ENCODE measurements at regions of chr10 and their contacts with region 1.

Region 1: GRCh38 chr10:125982260-125982948 is 86.0 kb downstream of the FANK1 start:
- DNase-seq: peak; percentile 85
- ATAC-seq: peak; percentile 76
- H3K4me3 ChIP-seq: no peak overlapping the region
- H3K4me3 Mint-ChIP-seq: no peak overlapping the region
- H3K27ac ChIP-seq: no peak overlapping the region
- H3K27ac Mint-ChIP-seq: peak overlapping the region; percentile 35
- H3K4me1 ChIP-seq: no peaks in the 10 kb centered on the region
- H3K4me1 Mint-ChIP-seq: peaks cover 13% of the 10 kb centered on the region
- H3K27me3 ChIP-seq: no peaks in the 10 kb centered on the region
- H3K27me3 Mint-ChIP-seq: peaks cover 15% of the 10 kb centered on the region
- CTCF ChIP-seq: peak; percentile 85

Region 2: DNA sequence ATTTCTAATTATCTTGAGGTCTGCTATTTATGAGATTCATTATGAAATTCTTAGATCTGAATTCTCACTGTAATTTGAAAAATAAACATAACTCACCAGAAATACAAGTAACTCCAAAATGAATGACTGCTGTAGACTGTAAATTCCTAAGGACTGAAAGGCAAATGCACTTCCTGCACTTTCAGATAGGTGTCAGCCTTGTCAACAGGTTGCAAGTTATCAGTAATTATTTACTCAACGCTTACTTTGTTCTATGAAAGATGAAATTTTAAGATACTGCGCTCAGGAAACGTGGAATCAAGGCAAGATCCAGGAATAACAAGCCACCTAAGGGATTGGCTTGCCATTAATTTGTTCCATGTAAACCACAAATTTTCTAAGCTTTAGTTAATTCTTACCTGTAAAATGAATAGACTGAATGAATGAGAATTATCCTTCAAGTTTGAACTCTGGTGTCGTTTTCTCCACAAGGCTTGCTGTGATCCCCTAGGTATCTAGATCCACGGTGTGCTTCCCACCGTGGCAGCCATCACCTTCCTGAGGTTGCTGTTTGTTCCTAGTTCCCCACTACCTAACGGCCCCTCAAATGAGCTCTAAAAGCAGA is 113.9 kb before region 1 on chr10:
- CTCF ChIA-PET with region 1: interaction called, 5 read pairs
- POLR2A ChIA-PET with region 1: no interaction called
- intact Hi-C with region 1: loop called (anchors 5 kb)
- DNase-seq: peak; percentile 30
- ATAC-seq: no peak
- H3K4me3 ChIP-seq: no peak overlapping the region
- H3K4me3 Mint-ChIP-seq: no peak overlapping the region
- H3K27ac ChIP-seq: no peak overlapping the region
- H3K27ac Mint-ChIP-seq: no peak overlapping the region
- H3K4me1 ChIP-seq: no peaks in the 10 kb centered on the region
- H3K4me1 Mint-ChIP-seq: no peaks in the 10 kb centered on the region
- H3K27me3 ChIP-seq: no peaks in the 10 kb centered on the region
- H3K27me3 Mint-ChIP-seq: no peaks in the 10 kb centered on the region
- CTCF ChIP-seq: peak; percentile 87

Region 3: GRCh38 chr10:126101801-126102200 is 119.4 kb after region 1 on chr10:
- CTCF ChIA-PET with region 1: interaction called, 74 read pairs
- POLR2A ChIA-PET with region 1: no interaction called
- intact Hi-C with region 1: loop called (anchors 1 kb)
- DNase-seq: peak; percentile 60
- ATAC-seq: peak; percentile 92
- H3K4me3 ChIP-seq: no peak overlapping the region
- H3K4me3 Mint-ChIP-seq: no peak overlapping the region
- H3K27ac ChIP-seq: no peak overlapping the region
- H3K27ac Mint-ChIP-seq: peak overlapping the region; percentile 50
- H3K4me1 ChIP-seq: peaks cover 8 to 15% of the 10 kb centered on the region in 2 donors
- H3K4me1 Mint-ChIP-seq: peaks cover 15% of the 10 kb centered on the region
- H3K27me3 ChIP-seq: no peaks in the 10 kb centered on the region
- H3K27me3 Mint-ChIP-seq: peaks cover 2% of the 10 kb centered on the region
- CTCF ChIP-seq: no peak

Region 4: DNA sequence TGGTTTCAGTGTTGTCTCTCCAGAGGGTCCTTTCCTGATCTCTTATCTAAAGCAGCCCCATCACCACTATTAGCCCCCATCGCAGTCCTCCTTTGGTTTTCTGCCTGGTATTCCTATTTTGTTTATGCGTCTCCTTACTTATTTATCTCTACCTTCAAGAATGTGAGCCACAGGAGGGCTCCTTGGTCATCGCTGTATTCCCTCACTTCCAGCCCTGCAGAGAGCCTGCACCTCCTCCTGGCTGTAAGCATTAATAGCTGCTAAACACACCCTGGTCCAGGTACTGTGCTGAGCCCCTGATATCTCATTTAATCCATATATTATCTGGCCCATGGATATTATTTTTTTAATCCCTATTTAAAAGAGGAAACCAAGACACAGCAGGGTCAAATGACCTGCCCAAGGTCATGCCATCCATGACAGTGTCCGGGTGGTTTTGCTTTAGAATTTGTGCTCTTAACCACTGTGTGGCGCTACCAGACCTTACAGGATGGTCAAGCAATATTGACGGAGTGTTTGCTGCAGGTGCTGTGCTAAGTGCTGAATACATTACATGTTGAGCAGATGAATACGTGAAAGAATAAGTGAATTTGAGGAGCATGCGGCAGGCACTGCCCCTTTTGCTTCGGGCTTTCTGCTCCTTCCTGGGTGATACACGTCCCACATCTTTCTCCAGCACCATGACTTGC is 178.7 kb after region 1 on chr10:
- CTCF ChIA-PET with region 1: interaction called, 4 read pairs
- POLR2A ChIA-PET with region 1: no interaction called
- intact Hi-C with region 1: loop called (anchors 1 kb)
- DNase-seq: no peak
- ATAC-seq: no peak
- H3K4me3 ChIP-seq: no peak overlapping the region
- H3K4me3 Mint-ChIP-seq: no peak overlapping the region
- H3K27ac ChIP-seq: no peak overlapping the region
- H3K27ac Mint-ChIP-seq: no peak overlapping the region
- H3K4me1 ChIP-seq: no peaks in the 10 kb centered on the region
- H3K4me1 Mint-ChIP-seq: peaks cover under 1% of the 10 kb centered on the region
- H3K27me3 ChIP-seq: peaks cover 0 to 2% (median 0%) of the 10 kb centered on the region in 4 experiments
- H3K27me3 Mint-ChIP-seq: peaks cover 15% of the 10 kb centered on the region
- CTCF ChIP-seq: no peak

Region 5: DNA sequence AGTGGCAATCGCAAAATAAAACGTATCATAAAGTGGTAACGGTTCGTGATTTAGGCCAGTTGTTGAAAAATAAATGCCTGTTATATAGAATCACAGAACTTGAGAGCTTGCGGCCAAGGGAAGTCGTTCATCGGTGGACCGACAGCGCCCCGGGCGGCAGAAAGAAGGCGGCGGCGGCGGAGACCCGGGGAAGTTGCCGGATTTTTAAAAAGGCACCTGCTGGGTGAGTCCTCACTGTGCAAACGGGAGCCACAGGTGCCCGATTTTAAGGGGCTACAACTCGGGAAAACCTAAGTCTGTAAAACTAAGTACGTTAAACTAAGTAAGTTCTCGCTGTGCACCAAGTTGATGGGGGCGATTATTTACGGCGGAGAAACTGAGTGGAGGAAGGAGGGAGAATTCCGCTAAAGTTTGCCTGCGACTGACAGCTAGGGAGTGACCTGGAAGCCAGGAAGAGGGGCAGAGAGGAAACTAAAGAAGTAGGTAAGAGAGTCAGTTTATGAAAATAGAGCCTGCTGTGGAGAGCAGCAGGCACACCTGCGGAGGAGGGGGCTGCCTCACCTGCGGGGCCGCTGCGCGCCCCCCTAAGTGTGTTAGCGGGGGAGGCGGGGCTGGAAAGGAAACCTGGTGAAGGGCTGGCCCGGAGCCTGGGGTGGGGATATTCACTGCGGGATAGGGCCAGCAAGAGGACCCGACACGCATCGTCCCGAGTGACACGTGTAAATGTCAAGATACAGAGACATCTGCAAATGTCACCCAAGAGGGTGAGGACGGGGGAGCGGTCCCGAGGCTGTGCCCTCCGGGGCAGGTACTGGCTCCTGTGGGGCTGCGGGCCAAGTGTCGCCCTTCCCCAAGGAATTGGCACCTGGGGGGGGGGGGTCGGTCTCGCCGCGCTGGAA is 404.9 kb after region 1 on chr10:
- CTCF ChIA-PET with region 1: interaction called, 4 read pairs
- POLR2A ChIA-PET with region 1: no interaction called
- intact Hi-C with region 1: loop called (anchors 2 kb)
- DNase-seq: peak; percentile 12
- ATAC-seq: no peak
- H3K4me3 ChIP-seq: no peak overlapping the region
- H3K4me3 Mint-ChIP-seq: no peak overlapping the region
- H3K27ac ChIP-seq: no peak overlapping the region
- H3K27ac Mint-ChIP-seq: no peak overlapping the region
- H3K4me1 ChIP-seq: no peaks in the 10 kb centered on the region
- H3K4me1 Mint-ChIP-seq: peaks cover 7% of the 10 kb centered on the region
- H3K27me3 ChIP-seq: peaks cover 0 to 26% (median 6%) of the 10 kb centered on the region in 4 experiments
- H3K27me3 Mint-ChIP-seq: peaks cover 50% of the 10 kb centered on the region
- CTCF ChIP-seq: peak; percentile 16

Region 6: GRCh38 chr10:126504063-126504739 is 521.8 kb after region 1 on chr10:
- CTCF ChIA-PET with region 1: interaction called, 80 read pairs
- POLR2A ChIA-PET with region 1: no interaction called
- intact Hi-C with region 1: no loop called
- DNase-seq: peak; percentile 52
- ATAC-seq: no peak
- H3K4me3 ChIP-seq: no peak overlapping the region
- H3K4me3 Mint-ChIP-seq: no peak overlapping the region
- H3K27ac ChIP-seq: no peak overlapping the region
- H3K27ac Mint-ChIP-seq: no peak overlapping the region
- H3K4me1 ChIP-seq: no peaks in the 10 kb centered on the region
- H3K4me1 Mint-ChIP-seq: no peaks in the 10 kb centered on the region
- H3K27me3 ChIP-seq: no peaks in the 10 kb centered on the region
- H3K27me3 Mint-ChIP-seq: no peaks in the 10 kb centered on the region
- CTCF ChIP-seq: peak; percentile 45

Region 7: DNA sequence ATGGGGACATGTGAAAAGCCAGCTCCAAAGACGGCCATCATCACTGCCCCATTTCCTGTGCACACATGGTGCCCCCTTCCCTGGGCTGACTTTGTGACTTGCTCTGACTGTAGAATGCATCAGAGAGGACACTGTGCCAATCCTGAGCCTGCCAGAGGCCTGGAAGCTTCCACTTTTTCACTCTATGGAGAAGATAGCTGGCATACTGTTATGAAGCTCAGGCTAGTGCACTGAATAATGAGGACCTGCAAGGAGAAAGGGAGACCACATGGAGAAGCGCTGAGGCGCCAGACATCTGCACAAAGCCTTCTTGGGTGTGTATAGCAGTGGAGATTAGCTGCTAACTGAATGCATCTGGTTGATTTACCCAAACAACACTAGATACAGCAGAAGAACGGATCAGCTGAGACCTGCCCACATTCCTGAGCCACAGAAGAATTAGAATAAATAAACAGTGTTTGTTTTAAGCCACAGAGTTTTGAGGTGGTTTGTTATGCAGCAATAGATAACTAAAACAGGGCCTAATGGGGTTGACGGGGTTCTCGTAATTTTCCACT is 747.0 kb after region 1 on chr10:
- CTCF ChIA-PET with region 1: no interaction called
- POLR2A ChIA-PET with region 1: no interaction called
- intact Hi-C with region 1: no loop called
- DNase-seq: no peak
- ATAC-seq: no peak
- H3K4me3 ChIP-seq: no peak overlapping the region
- H3K4me3 Mint-ChIP-seq: no peak overlapping the region
- H3K27ac ChIP-seq: no peak overlapping the region
- H3K27ac Mint-ChIP-seq: no peak overlapping the region
- H3K4me1 ChIP-seq: no peaks in the 10 kb centered on the region
- H3K4me1 Mint-ChIP-seq: no peaks in the 10 kb centered on the region
- H3K27me3 ChIP-seq: no peaks in the 10 kb centered on the region
- H3K27me3 Mint-ChIP-seq: no peaks in the 10 kb centered on the region
- CTCF ChIP-seq: no peak

Measured in B cell (primary cell).